ENCODE measurements at regions of chr12 and their contacts with region 1.

Region 1: DNA sequence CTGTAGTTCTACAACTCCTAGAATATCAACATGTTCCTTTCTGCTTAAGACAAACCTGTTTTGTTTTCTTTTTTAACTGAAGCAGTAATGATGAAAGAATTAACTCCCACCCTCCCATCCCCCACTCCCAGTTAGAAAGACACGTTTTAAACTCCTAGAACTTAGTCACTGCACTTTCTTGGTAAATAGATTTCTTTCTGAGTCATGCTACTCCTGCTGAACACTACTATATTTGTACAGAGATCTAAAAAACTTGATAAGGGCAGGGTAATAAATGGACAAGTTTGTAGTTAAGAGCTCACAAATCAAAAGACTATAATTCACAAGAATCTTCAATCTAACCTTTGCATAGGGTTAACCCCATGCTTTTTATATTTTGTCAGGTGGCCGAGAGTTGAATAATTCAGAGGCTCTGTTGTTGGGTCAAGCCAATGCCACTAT is 118.9 kb upstream of the PTPRB start:
- DNase-seq: peak in 1 of 2 experiments; percentile 86
- H3K4me3 ChIP-seq: peak overlapping the region; percentile 30; the same call in 1 of the 2 replicates
- H3K27ac ChIP-seq: peak overlapping the region; percentile 79
- H3K4me1 ChIP-seq: peaks cover 31% of the 10 kb centered on the region
- H3K27me3 ChIP-seq: no peaks in the 10 kb centered on the region
- CTCF ChIP-seq: no peak

Region 2: DNA sequence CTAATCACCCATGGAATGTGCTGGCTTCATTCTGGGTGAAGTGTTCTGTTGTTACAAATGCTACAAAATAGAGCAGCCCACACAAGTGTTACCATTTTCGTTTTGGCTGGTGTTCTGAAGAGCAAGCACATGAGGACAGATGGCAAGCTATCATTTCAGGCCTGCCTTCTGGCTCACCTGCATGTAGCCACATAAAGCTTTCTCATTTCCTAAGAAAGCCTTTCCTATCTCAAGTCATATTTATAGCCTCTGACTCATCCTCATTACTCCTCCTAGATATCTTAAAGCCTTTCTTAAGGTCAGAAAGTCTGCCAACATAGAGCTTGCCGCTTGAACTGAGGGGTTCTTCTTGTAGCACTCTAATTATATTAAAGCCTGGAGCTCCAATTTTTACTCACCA is 75.4 kb after region 1 on chr12:
- CTCF ChIA-PET with region 1: no interaction called
- POLR2A ChIA-PET with region 1: interaction called, 12 read pairs
- intact Hi-C with region 1: no loop called
- DNase-seq: no peak
- H3K4me3 ChIP-seq: no peak overlapping the region
- H3K27ac ChIP-seq: no peak overlapping the region
- H3K4me1 ChIP-seq: 0 out of 2 replicates have a peak, but pooled peaks cover 4% of the 10 kb centered on the region
- H3K27me3 ChIP-seq: no peaks in the 10 kb centered on the region
- CTCF ChIP-seq: no peak

Region 3: DNA sequence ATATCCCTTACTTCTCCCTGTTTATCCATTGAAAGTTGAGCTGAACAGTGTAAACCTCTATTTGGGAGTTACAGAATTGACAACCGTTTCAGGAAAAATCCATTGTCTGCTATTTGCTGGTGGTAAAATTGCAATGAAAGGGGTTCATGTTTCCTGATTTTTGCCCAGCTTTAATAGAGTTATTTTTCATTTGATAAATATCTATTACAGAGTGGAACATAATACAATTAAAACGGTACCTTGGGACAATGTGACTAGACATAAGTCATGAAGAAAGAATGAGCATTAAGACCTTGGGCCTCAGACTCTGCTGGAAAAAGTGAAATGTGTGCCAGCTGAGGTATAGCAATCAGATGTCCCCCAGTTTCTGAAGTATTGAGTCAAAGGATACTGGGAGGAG is 151.2 kb after region 1 on chr12:
- CTCF ChIA-PET with region 1: no interaction called
- POLR2A ChIA-PET with region 1: no interaction called
- intact Hi-C with region 1: no loop called
- DNase-seq: no peak
- H3K4me3 ChIP-seq: no peak overlapping the region
- H3K27ac ChIP-seq: no peak overlapping the region
- H3K4me1 ChIP-seq: no peaks in the 10 kb centered on the region
- H3K27me3 ChIP-seq: no peaks in the 10 kb centered on the region
- CTCF ChIP-seq: no peak